ENCODE measurements at regions of chr2 and their contacts with region 1.

Region 1: GRCh38 chr2:137865954-137866540 is 98.2 kb upstream of the HNMT start:
- DNase-seq: peak; percentile 53
- H3K4me3 ChIP-seq: no peak overlapping the region
- H3K27ac ChIP-seq: no peak overlapping the region
- H3K4me1 ChIP-seq: no peaks in the 10 kb centered on the region
- H3K27me3 ChIP-seq: peaks cover 0 to 3% of the 10 kb centered on the region in 2 experiments
- CTCF ChIP-seq: peak; percentile 57 to 63
- POLR2A ChIP-seq: no peak

Region 2: DNA sequence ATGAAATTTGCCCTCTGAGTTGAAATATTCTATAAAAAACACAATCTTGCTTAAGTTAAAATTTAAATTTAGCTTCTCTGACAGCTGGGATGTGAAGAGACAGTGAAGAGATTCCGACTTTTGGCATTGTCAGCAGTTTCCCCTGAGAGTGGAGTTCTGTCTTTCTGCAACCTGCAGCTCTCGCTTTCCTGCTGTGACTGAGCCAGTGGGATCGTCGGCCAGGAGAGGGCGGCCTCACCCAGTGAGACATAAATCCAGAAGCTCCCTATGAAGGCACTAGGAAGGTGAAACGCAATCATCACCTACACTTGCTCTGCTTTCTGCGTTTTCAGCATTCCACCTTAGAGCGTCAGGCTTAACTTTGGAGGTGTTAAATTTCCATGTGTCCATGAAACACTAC is 22.8 kb after region 1 on chr2:
- CTCF ChIA-PET with region 1: interaction called, 12 read pairs
- POLR2A ChIA-PET with region 1: no interaction called
- dilution Hi-C with region 1: no loop called
- intact Hi-C with region 1: no loop called
- DNase-seq: peak; percentile 31
- H3K4me3 ChIP-seq: no peak overlapping the region
- H3K27ac ChIP-seq: no peak overlapping the region
- H3K4me1 ChIP-seq: no peaks in the 10 kb centered on the region
- H3K27me3 ChIP-seq: no peaks in the 10 kb centered on the region
- CTCF ChIP-seq: peak; percentile 23 to 67
- POLR2A ChIP-seq: no peak

Region 3: DNA sequence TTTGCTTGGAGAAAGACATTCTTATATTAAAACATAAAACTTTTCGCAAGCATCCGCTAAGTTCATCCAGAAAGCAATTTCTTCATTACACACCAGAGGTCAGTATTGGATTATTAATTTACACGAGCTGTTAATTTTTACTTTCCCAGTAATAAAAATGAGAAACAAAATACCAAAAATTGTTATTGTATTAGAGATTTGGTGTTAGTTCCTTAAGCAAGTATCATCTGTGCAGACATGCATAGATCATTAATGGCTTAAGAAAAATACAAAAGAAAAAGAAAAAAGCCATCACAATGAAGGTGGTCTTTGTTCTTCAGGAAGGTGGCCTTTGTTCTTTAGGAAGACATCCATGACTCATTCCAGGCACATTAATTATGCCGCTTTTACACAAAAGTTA is 44.6 kb after region 1 on chr2:
- CTCF ChIA-PET with region 1: interaction called, 11 read pairs
- POLR2A ChIA-PET with region 1: no interaction called
- dilution Hi-C with region 1: no loop called
- intact Hi-C with region 1: no loop called
- DNase-seq: peak; percentile 52
- H3K4me3 ChIP-seq: no peak overlapping the region
- H3K27ac ChIP-seq: no peak overlapping the region
- H3K4me1 ChIP-seq: peaks cover 4% of the 10 kb centered on the region
- H3K27me3 ChIP-seq: peaks cover 0 to 3% of the 10 kb centered on the region in 2 experiments
- CTCF ChIP-seq: peak; percentile 26
- POLR2A ChIP-seq: no peak

Region 4: DNA sequence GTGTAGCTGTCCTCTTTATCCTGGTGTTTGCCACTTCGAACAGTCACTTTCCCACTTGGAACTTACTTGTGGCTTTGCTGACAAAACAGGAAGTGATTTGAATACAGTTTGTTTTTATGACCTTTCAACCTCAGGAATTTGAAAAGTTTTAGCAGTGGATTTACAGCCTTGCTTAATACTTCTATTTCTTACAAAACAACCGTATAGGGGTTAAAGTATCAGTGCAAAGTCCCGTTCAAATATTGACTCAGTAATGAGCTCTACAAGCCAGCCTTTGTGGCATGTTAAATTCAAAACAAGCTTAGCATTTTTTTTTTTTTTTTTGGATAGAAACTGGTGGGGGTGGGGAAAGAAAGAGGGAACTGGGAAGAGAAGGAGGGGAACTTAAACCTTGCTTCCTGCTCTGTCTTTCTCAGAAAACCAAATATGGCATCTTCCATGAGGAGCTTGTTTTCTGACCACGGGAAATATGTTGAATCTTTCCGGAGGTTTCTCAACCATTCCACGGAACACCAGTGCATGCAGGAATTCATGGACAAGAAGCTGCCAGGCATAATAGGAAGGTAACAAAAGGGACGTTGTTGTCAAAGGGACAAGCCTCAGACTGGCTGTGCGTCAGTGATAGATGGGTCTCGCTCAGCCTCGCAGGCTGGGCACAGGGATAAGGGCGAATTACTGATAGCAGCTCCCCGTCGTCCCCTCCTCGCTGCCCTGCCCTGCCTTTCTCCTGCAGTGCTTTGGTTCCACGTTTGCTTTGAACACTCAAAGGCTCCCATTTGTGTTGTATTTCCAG is 98.2 kb after region 1 on chr2 and contains the start of gene HNMT:
- CTCF ChIA-PET with region 1: no interaction called
- POLR2A ChIA-PET with region 1: no interaction called
- dilution Hi-C with region 1: no loop called
- intact Hi-C with region 1: no loop called
- DNase-seq: peak; percentile 84
- H3K4me3 ChIP-seq: peak within 1 kb of the TSS; percentile 13 to 59 (median 55)
- H3K27ac ChIP-seq: peak within 1 kb of the TSS; percentile 64
- H3K4me1 ChIP-seq: peaks cover 48% of the 10 kb centered on the region
- H3K27me3 ChIP-seq: no peaks in the 10 kb centered on the region
- CTCF ChIP-seq: no peak
- POLR2A ChIP-seq: peak; percentile 32
- total RNA-seq, gene HNMT: 13.4 and 16.9 TPM in 2 replicates

Region 5: DNA sequence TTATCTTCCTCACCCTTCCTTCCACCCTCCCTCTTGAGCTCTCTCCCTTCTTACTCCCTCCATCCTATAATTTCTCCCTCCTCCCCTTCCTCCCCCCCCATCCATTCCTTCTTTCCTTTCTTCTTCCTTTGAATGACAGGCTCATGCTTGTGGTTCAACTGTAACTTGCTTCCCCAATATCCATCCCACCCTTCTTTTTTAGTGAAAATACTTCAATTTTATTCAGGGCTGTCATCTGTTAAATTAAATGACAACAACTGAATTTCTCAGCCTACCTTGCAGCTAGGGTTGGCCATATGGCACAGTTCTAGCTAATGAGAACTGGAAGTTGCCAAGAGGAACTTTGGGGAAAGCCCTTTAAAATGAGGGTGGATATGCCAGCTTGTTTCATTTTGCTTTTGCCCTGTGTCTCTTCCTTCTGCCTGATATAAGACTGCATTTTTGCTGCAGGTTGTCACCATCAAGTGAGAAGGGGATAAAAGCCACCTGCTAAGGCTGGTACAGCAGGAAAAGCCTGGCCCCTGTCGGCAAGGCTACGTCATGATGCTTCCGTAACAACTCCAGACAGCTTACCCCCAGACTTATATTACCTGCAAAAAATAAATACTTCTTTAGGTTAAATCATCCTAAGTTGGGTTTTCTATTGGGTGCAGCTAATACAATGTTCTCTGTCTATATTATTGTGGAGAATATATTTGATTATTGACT is 792.3 kb after region 1 on chr2:
- CTCF ChIA-PET with region 1: no interaction called
- POLR2A ChIA-PET with region 1: no interaction called
- dilution Hi-C with region 1: no loop called
- intact Hi-C with region 1: no loop called
- DNase-seq: no peak
- H3K4me3 ChIP-seq: no peak overlapping the region
- H3K27ac ChIP-seq: no peak overlapping the region
- H3K4me1 ChIP-seq: no peaks in the 10 kb centered on the region
- H3K27me3 ChIP-seq: no peaks in the 10 kb centered on the region
- CTCF ChIP-seq: no peak
- POLR2A ChIP-seq: no peak